ENCODE measurements at regions of chrX and their contacts with region 1.

Region 1: GRCh38 chrX:109485470-109486340 is 3.8 kb upstream of the GUCY2F start:
- DNase-seq: peak; percentile 49 to 60
- H3K4me3 ChIP-seq: no peak overlapping the region
- H3K27ac ChIP-seq: no peak overlapping the region
- H3K4me1 ChIP-seq: no peaks in the 10 kb centered on the region
- H3K27me3 ChIP-seq: peaks cover 7% of the 10 kb centered on the region; the same call in 1 of the 2 replicates
- CTCF ChIP-seq: peak; percentile 99

Region 2: DNA sequence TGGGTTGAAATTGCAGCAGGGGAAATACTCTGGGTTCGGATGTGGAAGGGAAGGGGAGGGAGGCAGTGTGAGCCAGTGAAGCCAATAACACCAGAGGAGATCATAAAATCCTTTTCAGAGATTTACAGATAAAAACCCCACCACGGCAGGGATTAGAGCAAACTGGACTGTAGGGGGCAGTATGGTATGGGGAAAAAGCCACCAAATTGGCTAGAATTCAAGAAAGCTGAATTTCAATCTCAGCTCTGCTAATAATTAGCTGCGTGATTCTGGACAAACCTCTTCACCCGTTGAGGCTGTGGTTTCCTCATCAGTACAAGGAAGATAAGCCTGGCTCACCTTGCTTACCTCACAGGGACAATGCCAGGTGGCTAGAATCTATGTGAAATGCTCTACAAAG is 1286.0 kb before region 1 on chrX:
- CTCF ChIA-PET with region 1: no interaction called
- POLR2A ChIA-PET with region 1: no interaction called
- intact Hi-C with region 1: loop called (anchors 10 kb)
- DNase-seq: peak; percentile 43 to 44
- H3K4me3 ChIP-seq: no peak overlapping the region
- H3K27ac ChIP-seq: no peak overlapping the region
- H3K4me1 ChIP-seq: no peaks in the 10 kb centered on the region
- H3K27me3 ChIP-seq: no peaks in the 10 kb centered on the region
- CTCF ChIP-seq: peak; percentile 77

Region 3: GRCh38 chrX:109550786-109551185 is 65.1 kb after region 1 on chrX:
- CTCF ChIA-PET with region 1: no interaction called
- POLR2A ChIA-PET with region 1: no interaction called
- intact Hi-C with region 1: no loop called
- DNase-seq: no peak
- H3K4me3 ChIP-seq: no peak overlapping the region
- H3K27ac ChIP-seq: no peak overlapping the region
- H3K4me1 ChIP-seq: no peaks in the 10 kb centered on the region
- H3K27me3 ChIP-seq: no peaks in the 10 kb centered on the region
- CTCF ChIP-seq: no peak

Region 4: DNA sequence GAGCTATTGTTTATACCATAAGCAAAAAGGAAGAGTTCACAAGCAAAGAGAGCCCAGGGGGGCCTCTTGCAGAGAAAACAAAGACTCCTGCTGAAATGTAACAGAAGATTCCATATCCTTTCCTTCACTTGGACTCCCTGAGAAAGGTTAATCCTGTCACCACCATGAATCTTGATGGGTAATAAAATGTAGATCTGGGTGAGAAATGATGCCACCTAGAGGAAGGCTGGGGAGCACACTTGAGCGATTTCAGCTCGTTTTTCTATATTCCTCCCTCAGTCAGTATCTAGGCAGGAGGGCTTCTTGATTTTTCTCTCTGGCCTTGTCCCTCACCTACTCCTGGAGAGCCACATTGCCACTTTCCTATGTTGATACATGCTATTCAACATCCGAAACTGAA is 149.5 kb after region 1 on chrX:
- CTCF ChIA-PET with region 1: interaction called, 11 read pairs
- POLR2A ChIA-PET with region 1: no interaction called
- intact Hi-C with region 1: loop called (anchors 1 kb)
- DNase-seq: peak in 1 of 2 experiments; percentile 4
- H3K4me3 ChIP-seq: no peak overlapping the region
- H3K27ac ChIP-seq: no peak overlapping the region
- H3K4me1 ChIP-seq: no peaks in the 10 kb centered on the region
- H3K27me3 ChIP-seq: no peaks in the 10 kb centered on the region
- CTCF ChIP-seq: peak; percentile 71

Region 5: DNA sequence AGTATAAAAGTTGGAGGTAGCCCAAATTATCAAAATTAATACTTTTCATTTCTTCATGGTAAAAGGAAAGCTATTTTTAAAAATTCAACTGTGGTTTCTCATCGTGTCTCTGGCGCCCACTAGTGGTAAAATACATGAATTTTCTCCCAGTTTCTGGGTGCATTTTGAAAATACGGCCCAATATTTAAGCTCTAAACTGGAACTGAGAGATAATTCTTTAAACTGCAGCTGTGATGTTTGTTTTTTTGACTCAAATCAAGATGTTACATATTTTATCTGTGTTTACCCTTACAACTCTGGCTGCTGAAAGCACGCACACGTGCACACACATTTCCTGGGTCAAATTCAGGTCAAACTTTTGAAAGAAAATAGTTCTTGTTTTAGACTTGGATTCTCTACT is 371.3 kb after region 1 on chrX:
- CTCF ChIA-PET with region 1: no interaction called
- POLR2A ChIA-PET with region 1: no interaction called
- intact Hi-C with region 1: loop called (anchors 1 kb)
- DNase-seq: no peak
- H3K4me3 ChIP-seq: no peak overlapping the region
- H3K27ac ChIP-seq: no peak overlapping the region
- H3K4me1 ChIP-seq: peaks cover 7% of the 10 kb centered on the region; the same call in 1 of the 2 replicates
- H3K27me3 ChIP-seq: no peaks in the 10 kb centered on the region
- CTCF ChIP-seq: peak; percentile 96

Region 6: DNA sequence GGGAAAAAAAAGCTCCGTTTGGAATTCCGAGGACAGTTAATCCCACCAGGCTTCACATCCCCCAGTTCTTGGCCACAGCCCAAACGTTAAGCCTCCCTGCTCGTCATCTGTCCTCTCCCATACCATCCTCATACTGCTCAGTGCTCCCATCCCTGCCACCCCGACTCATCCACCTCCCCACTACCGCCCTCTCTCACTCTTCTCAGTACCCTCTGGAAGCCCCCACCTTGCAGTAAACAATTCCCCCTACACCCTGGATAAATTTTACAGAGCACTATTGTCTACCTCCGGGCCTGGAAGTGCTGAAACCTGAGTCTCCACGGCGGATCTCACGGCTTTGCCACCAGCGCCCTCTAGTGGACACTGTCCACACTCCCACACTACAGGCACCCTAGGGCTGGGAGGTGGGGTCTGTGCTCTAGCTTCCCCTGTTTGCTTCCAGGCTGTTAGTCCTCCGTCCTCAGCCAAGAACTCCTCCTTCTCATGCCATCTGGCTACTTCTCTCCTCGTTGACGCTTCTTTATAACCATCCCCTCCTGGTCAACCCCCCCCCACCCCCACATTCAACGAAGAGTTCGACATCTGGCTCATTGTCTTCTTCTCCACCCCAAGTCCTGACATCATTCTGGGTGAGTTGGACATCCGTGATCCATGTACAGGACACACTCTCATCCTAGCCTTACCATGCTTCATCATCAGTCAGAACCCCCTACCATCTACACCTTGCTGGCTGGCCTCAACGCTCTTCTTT is 927.4 kb after region 1 on chrX:
- CTCF ChIA-PET with region 1: no interaction called
- POLR2A ChIA-PET with region 1: no interaction called
- intact Hi-C with region 1: loop called (anchors 5 kb)
- DNase-seq: peak; percentile 58 to 71
- H3K4me3 ChIP-seq: no peak overlapping the region
- H3K27ac ChIP-seq: no peak overlapping the region
- H3K4me1 ChIP-seq: peaks cover 20% of the 10 kb centered on the region
- H3K27me3 ChIP-seq: no peaks in the 10 kb centered on the region
- CTCF ChIP-seq: peak; percentile 94

Measured in PC-9 (cell line).